Activated B cell treated with CpG ODN at 0.5 μM for 24 hours (primary cell): ENCODE measurements at regions of chr20 and their contacts with region 1.

Region 1: GRCh38 chr20:44866703-44867335 is 18.7 kb upstream of the YWHAB start:
- DNase-seq: no peak
- ATAC-seq: no peak
- H3K4me3 Mint-ChIP-seq: no peak overlapping the region
- H3K27ac Mint-ChIP-seq: no peak overlapping the region
- H3K4me1 Mint-ChIP-seq: peaks cover 13% of the 10 kb centered on the region
- H3K27me3 Mint-ChIP-seq: peaks cover 5% of the 10 kb centered on the region
- CTCF ChIP-seq: no peak

Region 2: GRCh38 chr20:44115762-44116644 is 750.8 kb before region 1 on chr20:
- CTCF ChIA-PET with region 1: no interaction called
- POLR2A ChIA-PET with region 1: no interaction called
- intact Hi-C with region 1: loop called (anchors 5 kb)
- DNase-seq: no peak
- ATAC-seq: no peak
- H3K4me3 Mint-ChIP-seq: no peak overlapping the region
- H3K27ac Mint-ChIP-seq: no peak overlapping the region
- H3K4me1 Mint-ChIP-seq: no peaks in the 10 kb centered on the region
- H3K27me3 Mint-ChIP-seq: peaks cover 46% of the 10 kb centered on the region
- CTCF ChIP-seq: no peak

Region 3: GRCh38 chr20:44217342-44218092 is 649.3 kb before region 1 on chr20:
- CTCF ChIA-PET with region 1: interaction called, 17 read pairs
- POLR2A ChIA-PET with region 1: no interaction called
- intact Hi-C with region 1: loop called (anchors 1 kb)
- DNase-seq: peak; percentile 34
- ATAC-seq: peak; percentile 68
- H3K4me3 Mint-ChIP-seq: peak overlapping the region; percentile 46
- H3K27ac Mint-ChIP-seq: no peak overlapping the region
- H3K4me1 Mint-ChIP-seq: peaks cover 33% of the 10 kb centered on the region
- H3K27me3 Mint-ChIP-seq: no peaks in the 10 kb centered on the region
- CTCF ChIP-seq: peak; percentile 37

Region 4: GRCh38 chr20:44475694-44476560 is 390.9 kb before region 1 on chr20 and contains the start of gene TTPAL:
- CTCF ChIA-PET with region 1: no interaction called
- POLR2A ChIA-PET with region 1: no interaction called
- intact Hi-C with region 1: loop called (anchors 5 kb)
- DNase-seq: peak; percentile 93
- ATAC-seq: peak; percentile 91
- H3K4me3 Mint-ChIP-seq: peak within 1 kb of the TSS; percentile 96
- H3K27ac Mint-ChIP-seq: peak within 1 kb of the TSS; percentile 94
- H3K4me1 Mint-ChIP-seq: peaks cover 40% of the 10 kb centered on the region
- H3K27me3 Mint-ChIP-seq: no peaks in the 10 kb centered on the region
- CTCF ChIP-seq: no peak
- total RNA-seq, gene TTPAL: 27.5 and 27.7 TPM in 2 replicates

Region 5: DNA sequence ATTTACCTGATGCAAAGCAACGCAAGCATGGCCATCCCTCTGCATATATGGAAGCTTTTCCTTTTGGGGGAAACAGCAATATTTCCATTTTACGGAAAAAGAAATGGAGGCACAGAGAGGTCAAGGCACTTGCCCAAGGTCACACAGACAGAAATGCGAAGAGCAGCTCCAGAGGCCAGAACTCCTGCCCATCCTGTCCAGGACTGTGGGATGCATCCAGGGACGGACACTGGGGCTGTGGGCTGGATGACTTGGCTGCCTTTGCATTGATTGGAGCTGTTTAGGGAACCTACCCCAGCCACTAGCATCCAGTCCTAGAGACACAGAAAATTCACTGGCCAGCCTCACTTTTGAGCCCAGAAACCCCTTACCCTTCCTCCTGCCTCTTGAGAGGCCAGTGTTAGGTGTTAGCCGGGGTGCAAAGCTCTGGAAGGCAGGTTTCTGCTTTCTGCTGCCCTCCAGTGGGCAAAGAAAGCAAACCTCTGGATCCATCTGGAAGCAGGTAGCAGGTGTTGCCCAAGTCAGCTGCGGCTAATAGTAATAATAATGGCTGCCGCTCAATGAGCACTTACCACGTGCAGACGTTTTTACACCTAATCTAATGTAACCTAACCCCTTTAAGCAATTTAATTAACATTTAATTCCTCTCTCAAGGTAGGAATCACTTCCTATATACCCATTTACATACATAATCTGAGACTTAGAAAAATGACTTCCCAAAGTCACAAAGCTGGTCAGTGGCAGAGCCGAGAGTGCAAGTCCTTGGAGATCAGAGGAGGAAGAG is 183.4 kb before region 1 on chr20:
- CTCF ChIA-PET with region 1: interaction called, 22 read pairs
- POLR2A ChIA-PET with region 1: interaction called, 5 read pairs
- intact Hi-C with region 1: loop called (anchors 1 kb)
- DNase-seq: no peak
- ATAC-seq: peak; percentile 37
- H3K4me3 Mint-ChIP-seq: no peak overlapping the region
- H3K27ac Mint-ChIP-seq: no peak overlapping the region
- H3K4me1 Mint-ChIP-seq: peaks cover 2% of the 10 kb centered on the region
- H3K27me3 Mint-ChIP-seq: peaks cover 6% of the 10 kb centered on the region
- CTCF ChIP-seq: no peak

Region 6: DNA sequence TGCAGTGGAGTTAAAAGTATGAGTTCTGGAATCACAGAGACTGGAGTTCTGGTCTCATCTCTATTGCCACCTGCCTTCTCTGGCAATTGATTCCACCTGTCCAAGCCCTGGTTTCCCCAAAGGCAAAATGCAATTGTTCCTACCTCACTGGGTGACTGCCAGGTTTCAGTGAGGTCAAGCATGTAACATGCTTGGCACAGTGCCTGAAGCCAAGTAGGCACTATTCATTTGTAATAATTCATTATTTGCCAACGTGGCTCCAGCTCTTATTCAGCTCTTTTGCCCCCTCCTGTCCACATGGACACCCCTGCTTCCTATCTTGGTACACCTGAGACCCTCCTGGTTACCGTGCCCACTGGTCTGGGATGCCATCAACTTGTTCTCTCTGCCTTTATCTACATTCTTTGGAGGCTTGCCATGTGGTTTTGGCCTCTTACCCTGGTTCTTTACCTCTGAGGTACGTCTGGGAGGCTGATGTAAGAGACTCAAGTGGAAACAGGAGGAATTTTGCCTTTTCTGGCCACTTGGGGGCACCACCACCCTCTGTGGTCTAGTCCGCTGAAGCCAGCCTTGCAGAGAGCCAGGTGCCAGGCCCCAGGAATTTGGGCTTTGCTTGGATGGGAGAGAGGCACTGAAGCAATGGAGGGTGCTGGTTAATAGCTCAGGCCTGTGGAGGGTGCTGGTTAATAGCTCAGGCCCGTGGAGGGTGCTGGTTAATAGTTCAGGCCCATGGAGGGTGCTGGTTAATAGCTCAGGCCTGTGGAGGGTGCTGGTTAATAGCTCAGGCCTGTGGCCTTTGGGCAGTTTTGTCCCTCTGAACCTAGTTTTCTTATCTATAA is 119.4 kb before region 1 on chr20:
- CTCF ChIA-PET with region 1: interaction called, 10 read pairs
- POLR2A ChIA-PET with region 1: no interaction called
- intact Hi-C with region 1: loop called (anchors 1 kb)
- DNase-seq: peak; percentile 32
- ATAC-seq: no peak
- H3K4me3 Mint-ChIP-seq: peak overlapping the region; percentile 25
- H3K27ac Mint-ChIP-seq: no peak overlapping the region
- H3K4me1 Mint-ChIP-seq: peaks cover 15% of the 10 kb centered on the region
- H3K27me3 Mint-ChIP-seq: peaks cover 36% of the 10 kb centered on the region
- CTCF ChIP-seq: no peak